GM12878 (cell line): ENCODE measurements at regions of chr1 and their contacts with region 1.

Region 1: DNA sequence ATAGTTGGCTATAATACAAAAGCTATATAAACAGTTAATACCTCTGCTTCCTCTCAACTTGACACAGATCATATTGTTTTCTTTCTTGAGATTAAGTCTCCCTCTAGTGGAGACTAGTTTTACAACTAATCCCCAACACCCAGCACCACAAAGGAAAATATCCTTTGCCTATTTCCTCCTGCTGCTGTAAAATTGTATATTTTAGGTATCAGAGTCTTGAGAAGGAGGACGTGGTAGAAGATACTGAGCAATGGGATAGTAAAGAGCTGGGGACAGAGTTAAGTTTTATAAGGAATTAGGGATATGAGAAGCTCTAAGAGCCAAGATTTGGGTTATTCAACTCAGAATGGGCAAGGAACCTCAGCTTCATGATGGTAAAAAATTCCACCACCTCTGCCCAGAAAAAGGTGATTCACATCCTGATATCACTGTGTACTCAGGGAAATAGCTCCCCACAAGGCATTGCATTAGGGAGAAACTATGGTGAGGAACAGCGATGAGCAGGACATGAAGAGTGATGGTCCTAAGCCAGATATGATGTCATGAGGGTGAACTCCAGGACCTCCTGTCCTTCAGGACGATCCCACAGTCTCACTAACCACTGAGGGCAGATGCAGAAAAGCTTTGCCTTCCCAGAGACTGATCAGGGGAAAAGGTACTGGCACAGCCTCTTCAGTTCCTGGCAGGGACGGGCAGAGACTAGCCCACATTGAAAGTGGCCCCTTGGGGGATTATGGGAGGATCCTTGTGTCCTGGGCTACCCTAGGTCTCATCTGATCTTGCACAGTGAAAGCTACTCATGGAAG is 14.7 kb upstream of the CFAP126 start:
- DNase-seq: no peak
- ATAC-seq: peak; percentile 94
- H3K4me3 ChIP-seq: no peak overlapping the region
- H3K27ac ChIP-seq: no peak overlapping the region
- H3K4me1 ChIP-seq: peaks cover 14% of the 10 kb centered on the region; the same call in 1 of the 2 replicates
- H3K27me3 ChIP-seq: no peaks in the 10 kb centered on the region
- CTCF ChIP-seq: peak; percentile 39 to 75 (median 54); a peak in 5 of 6 replicates
- EP300 ChIP-seq: no peak
- POLR2A ChIP-seq: no peak
- RAD21 ChIP-seq: peak; percentile 78

Region 2: GRCh38 chr1:161139765-161140164 is 242.7 kb before region 1 on chr1:
- CTCF ChIA-PET with region 1: interaction called, 10 read pairs
- POLR2A ChIA-PET with region 1: interaction called, 3 read pairs
- RAD21 ChIA-PET with region 1: no interaction called
- SMC1A ChIA-PET with region 1: interaction called, 3 read pairs
- in situ Hi-C with region 1: no loop called
- intact Hi-C with region 1: no loop called
- DNase-seq: no peak
- ATAC-seq: peak; percentile 74
- H3K4me3 ChIP-seq: no peak overlapping the region
- H3K27ac ChIP-seq: no peak overlapping the region
- H3K4me1 ChIP-seq: no peaks in the 10 kb centered on the region
- H3K27me3 ChIP-seq: no peaks in the 10 kb centered on the region
- CTCF ChIP-seq: peak; percentile 40 to 61 (median 44)
- EP300 ChIP-seq: no peak
- POLR2A ChIP-seq: no peak
- RAD21 ChIP-seq: peak; percentile 74

Region 3: GRCh38 chr1:161192476-161193465 is 189.6 kb before region 1 on chr1:
- CTCF ChIA-PET with region 1: interaction called, 113 read pairs
- POLR2A ChIA-PET with region 1: interaction called, 4 read pairs
- RAD21 ChIA-PET with region 1: interaction called, 8 read pairs
- SMC1A ChIA-PET with region 1: interaction called, 18 read pairs
- in situ Hi-C with region 1: no loop called
- intact Hi-C with region 1: loop called (anchors 1 kb)
- DNase-seq: no peak
- ATAC-seq: peak; percentile 94
- H3K4me3 ChIP-seq: no peak overlapping the region
- H3K27ac ChIP-seq: no peak overlapping the region
- H3K4me1 ChIP-seq: peaks cover 19% of the 10 kb centered on the region
- H3K27me3 ChIP-seq: no peaks in the 10 kb centered on the region
- CTCF ChIP-seq: peak; percentile 89 to 95 (median 89)
- EP300 ChIP-seq: no peak
- POLR2A ChIP-seq: no peak
- RAD21 ChIP-seq: peak; percentile 84

Region 4: GRCh38 chr1:161216945-161217712 is 165.3 kb before region 1 on chr1:
- CTCF ChIA-PET with region 1: interaction called, 204 read pairs
- POLR2A ChIA-PET with region 1: interaction called, 3 read pairs
- RAD21 ChIA-PET with region 1: interaction called, 3 read pairs
- SMC1A ChIA-PET with region 1: interaction called, 22 read pairs
- in situ Hi-C with region 1: no loop called
- intact Hi-C with region 1: no loop called
- DNase-seq: peak; percentile 92
- ATAC-seq: peak; percentile 95
- H3K4me3 ChIP-seq: peak overlapping the region; percentile 8; the same call in 1 of the 2 replicates
- H3K27ac ChIP-seq: peak overlapping the region; percentile 24
- H3K4me1 ChIP-seq: peaks cover 21% of the 10 kb centered on the region
- H3K27me3 ChIP-seq: no peaks in the 10 kb centered on the region
- CTCF ChIP-seq: no peak
- EP300 ChIP-seq: peak; percentile 11 to 73; a peak in 1 of 4 replicates
- POLR2A ChIP-seq: no peak
- RAD21 ChIP-seq: no peak

Region 5: GRCh38 chr1:161292631-161293030 is 89.8 kb before region 1 on chr1:
- CTCF ChIA-PET with region 1: interaction called, 23 read pairs
- POLR2A ChIA-PET with region 1: no interaction called
- RAD21 ChIA-PET with region 1: interaction called, 6 read pairs
- SMC1A ChIA-PET with region 1: interaction called, 9 read pairs
- in situ Hi-C with region 1: no loop called
- intact Hi-C with region 1: loop called (anchors 5 kb)
- DNase-seq: no peak
- ATAC-seq: no peak
- H3K4me3 ChIP-seq: no peak overlapping the region
- H3K27ac ChIP-seq: no peak overlapping the region
- H3K4me1 ChIP-seq: peaks cover 2% of the 10 kb centered on the region; the same call in 1 of the 2 replicates
- H3K27me3 ChIP-seq: no peaks in the 10 kb centered on the region
- CTCF ChIP-seq: no peak
- EP300 ChIP-seq: no peak
- POLR2A ChIP-seq: no peak
- RAD21 ChIP-seq: no peak

Region 6: GRCh38 chr1:161357073-161357472 is 25.3 kb before region 1 on chr1:
- CTCF ChIA-PET with region 1: interaction called, 12 read pairs
- POLR2A ChIA-PET with region 1: no interaction called
- RAD21 ChIA-PET with region 1: interaction called, 4 read pairs
- SMC1A ChIA-PET with region 1: interaction called, 3 read pairs
- in situ Hi-C with region 1: no loop called
- intact Hi-C with region 1: no loop called
- DNase-seq: no peak
- ATAC-seq: peak; percentile 65
- H3K4me3 ChIP-seq: no peak overlapping the region
- H3K27ac ChIP-seq: no peak overlapping the region
- H3K4me1 ChIP-seq: no peaks in the 10 kb centered on the region
- H3K27me3 ChIP-seq: no peaks in the 10 kb centered on the region
- CTCF ChIP-seq: no peak
- EP300 ChIP-seq: no peak
- POLR2A ChIP-seq: no peak
- RAD21 ChIP-seq: no peak

Region 7: GRCh38 chr1:161836018-161836417 is 453.6 kb after region 1 on chr1:
- CTCF ChIA-PET with region 1: no interaction called
- POLR2A ChIA-PET with region 1: no interaction called
- RAD21 ChIA-PET with region 1: no interaction called
- SMC1A ChIA-PET with region 1: no interaction called
- in situ Hi-C with region 1: no loop called
- intact Hi-C with region 1: no loop called
- DNase-seq: no peak
- ATAC-seq: no peak
- H3K4me3 ChIP-seq: no peak overlapping the region
- H3K27ac ChIP-seq: no peak overlapping the region
- H3K4me1 ChIP-seq: no peaks in the 10 kb centered on the region
- H3K27me3 ChIP-seq: no peaks in the 10 kb centered on the region
- CTCF ChIP-seq: no peak
- EP300 ChIP-seq: no peak
- POLR2A ChIP-seq: no peak
- RAD21 ChIP-seq: no peak